Right ventricle myocardium superior (tissue), 1 donor: ENCODE measurements at regions of chr18 and their contacts with region 1.

Region 1: DNA sequence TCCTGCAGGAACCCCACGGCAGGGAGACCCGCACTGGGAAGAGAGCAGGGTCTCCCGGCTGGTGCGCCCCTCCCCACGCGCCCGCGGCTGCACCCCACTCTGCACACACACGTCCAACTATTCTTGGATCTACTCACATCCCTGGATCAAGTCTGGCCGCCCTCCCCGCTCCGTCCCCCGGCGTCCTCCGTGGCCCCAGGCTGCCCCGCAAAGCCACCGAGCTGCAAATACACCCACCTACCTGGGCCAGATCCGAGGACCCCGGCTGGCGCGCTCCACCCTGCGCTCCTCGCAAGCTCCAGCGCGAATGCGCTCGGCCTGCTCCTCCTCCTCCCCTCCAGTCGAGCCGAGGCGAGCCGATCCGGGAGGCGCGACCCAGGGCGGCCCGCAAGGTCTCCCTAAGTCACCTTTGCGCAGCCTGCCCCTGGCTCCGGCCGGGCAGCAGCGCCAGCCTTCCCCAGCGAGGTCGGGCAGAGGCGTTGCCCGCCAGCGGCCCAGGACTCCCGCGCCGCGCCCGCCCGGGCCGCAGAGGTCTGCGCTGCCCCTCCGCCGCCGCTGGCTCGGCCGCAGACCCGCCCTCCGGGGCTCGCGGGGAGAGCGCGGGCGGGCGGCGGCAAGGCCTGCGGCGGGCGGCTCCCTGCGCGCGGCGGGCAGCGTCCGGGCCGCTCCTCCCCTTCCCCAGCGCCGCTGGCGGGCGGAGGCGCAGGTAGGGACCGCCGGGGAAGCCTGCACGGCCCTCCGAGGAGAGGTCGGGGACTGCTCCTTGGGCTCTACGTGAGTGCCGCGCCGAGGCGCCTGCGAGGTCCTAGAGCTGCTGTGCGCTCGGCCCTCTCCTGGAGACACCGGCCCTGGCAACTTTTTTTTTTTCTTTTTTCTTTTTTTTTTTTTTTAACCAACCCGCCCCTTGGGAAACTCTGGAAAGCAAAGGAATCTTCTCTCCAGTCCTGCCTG is 126.0 kb downstream of the OSBPL1A start:
- DNase-seq: peak; percentile 87
- ATAC-seq: peak; percentile 88

Region 2: DNA sequence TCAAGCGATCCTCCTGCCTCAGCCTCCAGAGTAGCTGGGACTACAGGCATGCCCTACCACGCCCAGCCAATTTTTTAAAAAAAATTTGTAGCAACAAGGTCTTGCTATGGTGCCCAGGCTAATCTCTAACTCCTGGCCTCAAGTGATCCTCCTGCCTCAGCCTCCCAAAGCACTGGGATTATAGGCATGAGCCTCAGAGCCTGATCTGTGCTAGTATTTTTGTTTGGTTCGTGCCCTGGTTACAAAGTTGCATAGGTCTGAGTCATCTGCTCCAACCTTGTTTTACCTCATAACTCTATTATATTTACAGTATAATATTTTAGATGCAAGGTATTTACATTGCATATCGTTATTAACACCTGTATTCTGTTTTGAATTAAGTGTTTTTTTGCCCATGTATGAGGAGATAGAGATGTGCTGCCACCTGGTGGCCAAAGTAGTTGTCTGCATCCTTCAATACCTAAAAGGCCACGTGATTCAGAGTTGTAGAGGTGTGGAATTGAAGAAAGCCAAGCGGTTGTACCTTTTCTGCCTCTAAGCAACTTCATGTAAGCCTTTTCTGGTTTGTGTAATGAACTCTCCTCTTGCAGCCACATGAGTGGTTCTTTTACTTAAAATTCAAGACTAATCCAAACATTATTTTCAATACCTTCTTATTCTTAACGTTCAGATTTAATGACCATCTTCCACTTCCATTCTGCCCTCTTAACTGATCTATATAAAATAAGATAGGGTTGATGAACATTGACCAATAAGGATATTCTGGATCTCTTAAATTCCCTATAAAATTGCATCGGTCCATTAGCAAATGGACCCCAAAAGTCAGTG is 152.7 kb before region 1 on chr18:
- intact Hi-C with region 1: no loop called
- DNase-seq: peak; percentile 69
- ATAC-seq: peak; percentile 88

Region 3: GRCh38 chr18:24176727-24177416 is 94.8 kb before region 1 on chr18:
- intact Hi-C with region 1: loop called (anchors 5 kb)
- DNase-seq: peak; percentile 64
- ATAC-seq: peak; percentile 87